PC-9 (cell line): ENCODE measurements at regions of chr1 and their contacts with region 1.

Region 1: DNA sequence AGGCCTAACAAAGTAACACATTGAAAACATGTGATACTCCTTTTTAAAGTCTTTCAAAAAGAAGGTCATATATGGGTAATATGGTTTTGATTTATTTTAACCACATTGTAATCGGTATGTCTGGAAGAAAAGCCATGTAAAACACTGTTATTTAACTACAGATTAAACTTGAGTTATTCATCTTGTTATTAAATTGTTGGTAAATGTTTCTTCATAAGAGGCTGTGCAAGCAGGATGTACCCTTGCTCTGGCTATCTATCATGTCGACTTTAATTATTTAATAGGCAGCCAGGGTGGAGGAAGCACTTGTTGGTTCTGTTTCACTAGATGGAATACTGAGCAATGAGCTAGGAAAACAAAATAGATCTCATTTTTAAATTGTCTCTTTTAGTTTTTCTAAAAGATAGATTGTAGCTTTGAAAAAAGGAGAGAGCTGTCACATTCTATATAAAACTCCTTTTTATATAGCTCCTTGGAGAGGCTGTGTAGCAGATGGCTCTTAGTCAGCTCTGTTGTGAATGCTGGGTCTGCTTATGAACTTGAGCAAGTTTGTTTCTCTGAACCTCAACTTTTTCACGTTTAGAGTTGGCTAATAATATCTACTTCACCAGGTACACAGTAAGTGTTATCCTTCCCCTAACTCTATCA is 39.5 kb downstream of the LRRC8B start:
- DNase-seq: no peak
- H3K4me3 ChIP-seq: no peak overlapping the region
- H3K27ac ChIP-seq: no peak overlapping the region
- H3K4me1 ChIP-seq: no peaks in the 10 kb centered on the region
- H3K27me3 ChIP-seq: no peaks in the 10 kb centered on the region
- CTCF ChIP-seq: no peak

Region 2: GRCh38 chr1:89598450-89599331 is 34.6 kb after region 1 on chr1:
- CTCF ChIA-PET with region 1: no interaction called
- POLR2A ChIA-PET with region 1: no interaction called
- intact Hi-C with region 1: no loop called
- DNase-seq: no peak
- H3K4me3 ChIP-seq: no peak overlapping the region
- H3K27ac ChIP-seq: no peak overlapping the region
- H3K4me1 ChIP-seq: no peaks in the 10 kb centered on the region
- H3K27me3 ChIP-seq: no peaks in the 10 kb centered on the region
- CTCF ChIP-seq: peak; percentile 81

Region 3: GRCh38 chr1:89711140-89711778 is 147.2 kb after region 1 on chr1:
- CTCF ChIA-PET with region 1: no interaction called
- POLR2A ChIA-PET with region 1: no interaction called
- intact Hi-C with region 1: no loop called
- DNase-seq: no peak
- H3K4me3 ChIP-seq: no peak overlapping the region
- H3K27ac ChIP-seq: no peak overlapping the region
- H3K4me1 ChIP-seq: no peaks in the 10 kb centered on the region
- H3K27me3 ChIP-seq: no peaks in the 10 kb centered on the region
- CTCF ChIP-seq: no peak

Region 4: DNA sequence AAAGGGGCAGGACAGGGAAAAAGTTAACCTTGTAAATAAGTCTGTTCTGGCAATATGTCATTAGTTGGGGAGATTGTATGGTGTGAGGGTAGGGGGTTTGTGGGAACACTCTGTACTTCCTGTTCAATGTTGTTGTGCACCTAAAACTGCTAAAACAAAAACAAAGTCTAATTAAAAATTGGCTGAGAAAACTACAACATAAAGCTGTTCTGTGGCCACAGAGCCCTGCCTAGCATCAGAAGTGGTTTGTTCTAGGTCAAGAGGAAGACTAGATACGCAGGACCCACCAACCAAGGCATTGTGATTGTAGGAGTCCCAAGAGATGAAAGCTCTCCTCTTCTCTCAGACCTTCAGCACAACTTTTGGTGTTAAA is 175.7 kb after region 1 on chr1:
- CTCF ChIA-PET with region 1: no interaction called
- POLR2A ChIA-PET with region 1: interaction called, 12 read pairs
- intact Hi-C with region 1: no loop called
- DNase-seq: no peak
- H3K4me3 ChIP-seq: no peak overlapping the region
- H3K27ac ChIP-seq: no peak overlapping the region
- H3K4me1 ChIP-seq: no peaks in the 10 kb centered on the region
- H3K27me3 ChIP-seq: no peaks in the 10 kb centered on the region
- CTCF ChIP-seq: no peak

Region 5: DNA sequence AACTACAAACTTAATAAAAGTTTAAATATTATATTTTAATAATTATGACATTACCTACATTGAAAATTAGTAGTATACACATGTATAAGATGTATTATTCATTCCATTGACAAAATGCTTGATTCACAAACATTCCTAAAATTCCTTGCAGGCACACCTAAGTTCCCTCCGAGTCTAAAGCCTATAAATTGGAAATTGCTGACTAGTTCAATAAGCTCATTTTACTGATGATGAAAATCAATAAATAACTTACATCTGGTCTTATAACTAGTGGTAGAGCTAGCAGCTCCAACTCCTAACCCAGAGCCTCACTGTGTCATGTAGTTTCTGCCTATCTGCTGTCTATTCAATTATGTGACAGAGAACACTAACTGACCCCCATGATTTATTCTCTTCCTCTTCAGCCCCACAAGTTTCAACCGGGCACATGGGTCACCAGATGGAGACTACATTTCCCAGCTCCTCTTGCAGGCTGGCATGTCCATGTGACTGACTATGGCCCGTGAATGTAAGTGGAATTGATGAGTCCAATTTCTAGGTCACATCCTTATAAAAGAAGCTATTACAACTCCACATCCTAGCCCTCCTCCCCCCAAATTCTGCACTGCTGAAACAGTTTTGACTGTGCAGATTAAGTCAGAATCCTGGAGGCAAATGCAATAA is 227.1 kb after region 1 on chr1:
- CTCF ChIA-PET with region 1: no interaction called
- POLR2A ChIA-PET with region 1: no interaction called
- intact Hi-C with region 1: no loop called
- DNase-seq: no peak
- H3K4me3 ChIP-seq: no peak overlapping the region
- H3K27ac ChIP-seq: no peak overlapping the region
- H3K4me1 ChIP-seq: no peaks in the 10 kb centered on the region
- H3K27me3 ChIP-seq: no peaks in the 10 kb centered on the region
- CTCF ChIP-seq: no peak